Panc1 (cell line): ENCODE measurements at regions of chr12 and their contacts with region 1.

Region 1: DNA sequence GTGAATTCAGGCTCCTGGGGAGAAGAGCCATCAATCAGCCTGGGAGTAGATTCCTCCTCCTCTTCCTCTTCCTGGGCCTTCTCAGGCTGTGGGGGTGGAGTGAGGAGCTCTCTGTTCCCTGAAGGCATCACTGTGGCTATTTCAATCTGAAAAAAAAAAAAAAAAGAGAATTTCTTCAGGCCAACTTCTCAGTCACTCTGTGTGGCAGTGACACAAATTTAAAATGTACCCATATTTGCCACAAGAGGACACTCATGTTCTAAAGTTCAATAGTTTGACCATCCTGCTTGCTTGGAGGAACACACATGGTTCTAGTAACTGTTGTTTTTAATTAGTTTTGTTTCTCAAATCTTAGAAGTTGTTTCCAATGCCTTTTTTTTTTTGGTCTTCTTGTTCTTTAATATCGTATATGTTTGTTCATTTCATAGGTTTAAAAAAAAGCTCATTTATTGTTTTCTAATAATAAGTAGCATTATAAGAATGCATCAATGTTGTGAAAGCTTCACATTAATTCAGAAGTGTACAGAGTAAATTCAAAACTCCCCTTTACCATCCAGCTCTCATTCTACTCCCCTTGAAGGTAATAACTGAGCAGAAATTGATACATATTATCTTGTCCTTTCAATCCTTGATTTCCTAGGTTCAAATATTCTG is 23.3 kb upstream of the CCER1 start:
- DNase-seq: no peak
- ATAC-seq: no peak
- H3K4me3 ChIP-seq: no peak overlapping the region
- H3K27ac ChIP-seq: no peak overlapping the region
- H3K4me1 ChIP-seq: no peaks in the 10 kb centered on the region
- H3K27me3 ChIP-seq: no peaks in the 10 kb centered on the region
- CTCF ChIP-seq: peak; percentile 74

Region 2: DNA sequence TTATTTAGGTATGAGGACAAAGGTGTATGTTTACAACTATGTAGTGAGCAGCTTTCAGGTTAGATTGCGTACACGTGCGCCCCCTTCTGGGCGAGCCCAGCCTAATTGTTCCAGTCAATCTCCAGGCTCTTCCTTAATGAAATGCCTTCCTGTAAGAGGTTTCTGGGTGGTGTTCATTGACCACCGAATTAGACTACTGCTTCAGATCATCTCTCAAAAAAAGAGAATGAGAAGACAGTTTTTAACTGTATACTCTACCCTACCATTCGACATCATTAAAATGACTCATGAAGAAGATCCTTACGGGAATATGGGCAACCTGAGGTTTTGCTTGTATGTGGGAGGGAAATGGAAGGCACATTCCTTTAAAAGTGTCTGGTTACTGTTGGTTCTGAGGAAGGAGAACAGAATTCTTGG is 130.9 kb after region 1 on chr12:
- CTCF ChIA-PET with region 1: no interaction called
- POLR2A ChIA-PET with region 1: no interaction called
- in situ Hi-C with region 1: no loop called
- intact Hi-C with region 1: loop called (anchors 2 kb)
- DNase-seq: peak; percentile 15
- ATAC-seq: no peak
- H3K4me3 ChIP-seq: no peak overlapping the region
- H3K27ac ChIP-seq: no peak overlapping the region
- H3K4me1 ChIP-seq: no peaks in the 10 kb centered on the region
- H3K27me3 ChIP-seq: no peaks in the 10 kb centered on the region
- CTCF ChIP-seq: peak; percentile 71

Region 3: GRCh38 chr12:91326058-91327027 is 348.1 kb after region 1 on chr12:
- CTCF ChIA-PET with region 1: no interaction called
- POLR2A ChIA-PET with region 1: no interaction called
- in situ Hi-C with region 1: no loop called
- intact Hi-C with region 1: loop called (anchors 2 kb)
- DNase-seq: peak; percentile 20
- ATAC-seq: no peak
- H3K4me3 ChIP-seq: no peak overlapping the region
- H3K27ac ChIP-seq: no peak overlapping the region
- H3K4me1 ChIP-seq: no peaks in the 10 kb centered on the region
- H3K27me3 ChIP-seq: no peaks in the 10 kb centered on the region
- CTCF ChIP-seq: peak; percentile 77; the same call in 1 of the 2 replicates

Region 4: DNA sequence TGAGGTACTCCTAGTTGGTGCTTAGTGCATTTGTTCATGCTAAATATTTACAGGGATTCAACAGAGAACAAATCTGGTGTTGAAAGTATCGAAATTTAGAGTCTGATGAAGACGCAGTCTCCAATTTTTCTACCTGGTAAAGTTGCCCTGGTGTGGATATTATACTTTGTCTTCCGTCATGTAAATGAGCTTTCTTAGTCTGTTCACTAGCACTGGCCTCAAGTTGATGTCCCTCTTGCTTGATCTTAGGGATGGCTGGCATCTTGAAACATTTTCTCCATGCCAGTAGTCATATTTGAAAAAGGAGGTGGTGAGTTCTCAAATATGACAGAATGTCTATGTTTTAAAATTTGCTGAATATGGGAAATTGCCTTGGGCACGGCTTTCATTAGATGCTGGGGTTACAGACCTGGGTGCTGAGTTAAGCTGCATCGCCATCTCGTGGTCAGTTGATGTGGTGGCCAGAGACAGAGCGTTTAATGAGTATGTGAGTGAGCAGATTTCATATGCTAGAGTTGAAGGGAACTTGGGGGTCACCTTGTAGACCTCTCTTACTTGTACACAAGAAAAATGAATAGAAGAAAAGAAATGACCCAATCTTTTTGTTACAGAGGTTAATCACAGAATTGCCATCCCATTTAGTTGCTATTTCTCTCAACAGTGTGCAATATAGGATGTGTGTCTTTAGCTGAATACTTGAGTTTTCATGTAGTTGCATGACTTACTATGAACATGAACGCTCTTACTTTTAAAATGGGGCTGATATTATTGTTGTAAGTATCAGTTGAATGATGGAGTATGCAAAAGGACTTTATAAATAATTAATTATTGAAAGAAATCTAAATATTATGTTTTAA is 377.1 kb after region 1 on chr12:
- CTCF ChIA-PET with region 1: no interaction called
- POLR2A ChIA-PET with region 1: no interaction called
- in situ Hi-C with region 1: no loop called
- intact Hi-C with region 1: loop called (anchors 2 kb)
- DNase-seq: peak; percentile 50
- ATAC-seq: peak; percentile 93
- H3K4me3 ChIP-seq: no peak overlapping the region
- H3K27ac ChIP-seq: no peak overlapping the region
- H3K4me1 ChIP-seq: no peaks in the 10 kb centered on the region
- H3K27me3 ChIP-seq: peaks cover 5% of the 10 kb centered on the region; the same call in 1 of the 2 replicates
- CTCF ChIP-seq: peak; percentile 87